H1 (cell line): ENCODE measurements at regions of chr16 and their contacts with region 1.

Region 1: GRCh38 chr16:67198238-67198734 is 645 bp upstream of the ELMO3 start:
- DNase-seq: peak in 1 of 2 experiments; percentile 73
- H3K4me3 ChIP-seq: peak overlapping the region in 1 of 4 experiments; percentile 75; a peak in 2 of 8 replicates
- H3K27ac ChIP-seq: no peak overlapping the region
- H3K4me1 ChIP-seq: peaks cover 0 to 12% (median 8%) of the 10 kb centered on the region in 4 experiments; a peak in 5 of 7 replicates
- H3K27me3 ChIP-seq: no peaks in the 10 kb centered on the region
- CTCF ChIP-seq: peak; percentile 65 to 98 (median 68)
- EP300 ChIP-seq: no peak
- POLR2A ChIP-seq: no peak
- RAD21 ChIP-seq: peak in 1 of 2 experiments; percentile 40; a peak in 1 of 4 replicates

Region 2: DNA sequence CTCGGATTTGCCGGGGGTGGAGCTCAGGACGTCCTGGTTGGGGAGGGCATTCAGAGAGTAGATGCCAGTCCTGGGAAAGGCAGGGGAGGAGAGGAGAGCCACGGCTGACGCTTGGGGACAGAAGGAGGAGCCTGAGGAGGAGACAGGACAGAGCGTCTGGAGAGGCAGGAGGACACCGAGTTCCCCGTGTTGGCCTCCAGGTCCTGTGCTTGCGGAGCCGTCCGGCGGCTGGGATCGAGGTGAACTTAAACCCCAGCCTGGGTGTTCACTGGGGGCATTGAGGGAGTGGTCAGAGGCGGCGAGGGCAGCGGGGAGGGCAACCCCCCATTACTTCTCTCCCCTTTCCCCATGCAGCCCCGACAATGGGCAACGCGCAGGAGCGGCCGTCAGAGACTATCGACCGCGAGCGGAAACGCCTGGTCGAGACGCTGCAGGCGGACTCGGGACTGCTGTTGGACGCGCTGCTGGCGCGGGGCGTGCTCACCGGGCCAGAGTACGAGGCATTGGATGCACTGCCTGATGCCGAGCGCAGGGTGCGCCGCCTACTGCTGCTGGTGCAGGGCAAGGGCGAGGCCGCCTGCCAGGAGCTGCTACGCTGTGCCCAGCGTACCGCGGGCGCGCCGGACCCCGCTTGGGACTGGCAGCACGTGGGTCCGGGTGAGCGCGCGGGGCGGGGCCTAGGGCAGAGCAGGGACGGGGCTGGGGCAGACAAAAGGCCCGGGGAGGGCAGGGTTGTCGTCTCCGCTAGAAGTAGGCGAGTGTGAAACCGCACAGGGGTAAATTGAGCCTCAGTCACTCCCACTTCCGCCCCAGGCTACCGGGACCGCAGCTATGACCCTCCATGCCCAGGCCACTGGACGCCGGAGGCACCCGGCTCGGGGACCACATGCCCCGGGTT is 24.2 kb before region 1 on chr16:
- CTCF ChIA-PET with region 1: interaction called, 44 read pairs
- POLR2A ChIA-PET with region 1: interaction called, 7 read pairs
- DNase-seq: peak in 1 of 2 experiments; percentile 78
- H3K4me3 ChIP-seq: peak overlapping the region; percentile 27 to 57 (median 34)
- H3K27ac ChIP-seq: no peak overlapping the region
- H3K4me1 ChIP-seq: peaks cover 0 to 40% (median 30%) of the 10 kb centered on the region in 4 experiments; a peak in 6 of 7 replicates
- H3K27me3 ChIP-seq: peaks cover 50 to 90% (median 86%) of the 10 kb centered on the region in 4 experiments
- CTCF ChIP-seq: peak in 2 of 3 experiments; percentile 14 to 15; a peak in 2 of 4 replicates
- EP300 ChIP-seq: no peak
- POLR2A ChIP-seq: no peak
- RAD21 ChIP-seq: peak; percentile 7 to 23; a peak in 2 of 4 replicates

Region 3: GRCh38 chr16:67183627-67184328 is 14.5 kb before region 1 on chr16 and contains the start of gene MATCAP1:
- CTCF ChIA-PET with region 1: interaction called, 78 read pairs
- POLR2A ChIA-PET with region 1: interaction called, 12 read pairs
- DNase-seq: peak; percentile 87 to 95
- H3K4me3 ChIP-seq: peak within 1 kb of the TSS; percentile 73 to 90 (median 85)
- H3K27ac ChIP-seq: peak within 1 kb of the TSS; percentile 98
- H3K4me1 ChIP-seq: peaks cover 0 to 19% (median 12%) of the 10 kb centered on the region in 4 experiments; a peak in 5 of 7 replicates
- H3K27me3 ChIP-seq: peaks cover 8 to 35% (median 21%) of the 10 kb centered on the region in 4 experiments
- CTCF ChIP-seq: no peak
- EP300 ChIP-seq: no peak
- POLR2A ChIP-seq: peak in 1 of 2 experiments; percentile 79; a peak in 2 of 3 replicates
- RAD21 ChIP-seq: no peak
- total RNA-seq, gene MATCAP1: 22.9 and 23.1 TPM in 2 replicates

Region 4: GRCh38 chr16:67226804-67227557 is 28.7 kb after region 1 on chr16 and contains the start of gene TMEM208:
- CTCF ChIA-PET with region 1: interaction called, 11 read pairs
- POLR2A ChIA-PET with region 1: interaction called, 19 read pairs
- DNase-seq: peak; percentile 96 to 99
- H3K4me3 ChIP-seq: peak within 1 kb of the TSS; percentile 83 to 96 (median 94)
- H3K27ac ChIP-seq: peak within 1 kb of the TSS; percentile 74
- H3K4me1 ChIP-seq: peaks cover 0 to 6% (median 3%) of the 10 kb centered on the region in 4 experiments; a peak in 3 of 7 replicates
- H3K27me3 ChIP-seq: no peaks in the 10 kb centered on the region; a peak in 4 of 7 replicates
- CTCF ChIP-seq: peak in 2 of 3 experiments; percentile 17 to 27; a peak in 3 of 4 replicates
- EP300 ChIP-seq: no peak
- POLR2A ChIP-seq: peak; percentile 66 to 94
- RAD21 ChIP-seq: no peak
- total RNA-seq, gene TMEM208: 37.7 and 37.9 TPM in 2 replicates